ENCODE measurements at regions of chr6 and their contacts with region 1.

Region 1: GRCh38 chr6:87393022-87393622 is 14.7 kb upstream of the CFAP206 start:
- DNase-seq: peak; percentile 45
- H3K4me3 Mint-ChIP-seq: no peak overlapping the region
- H3K27ac Mint-ChIP-seq: no peak overlapping the region
- H3K4me1 Mint-ChIP-seq: no peaks in the 10 kb centered on the region
- H3K27me3 Mint-ChIP-seq: no peaks in the 10 kb centered on the region

Region 2: GRCh38 chr6:87407901-87408720 is 15.0 kb after region 1 on chr6 and contains the start of gene CFAP206:
- CTCF ChIA-PET with region 1: interaction called, 11 read pairs
- DNase-seq: peak; percentile 83
- H3K4me3 Mint-ChIP-seq: peak within 1 kb of the TSS; percentile 76
- H3K27ac Mint-ChIP-seq: peak within 1 kb of the TSS; percentile 75
- H3K4me1 Mint-ChIP-seq: peaks cover 11% of the 10 kb centered on the region
- H3K27me3 Mint-ChIP-seq: peaks cover 19% of the 10 kb centered on the region